Mammary epithelial cell (primary cell): ENCODE measurements at regions of chr1 and their contacts with region 1.

Region 1: DNA sequence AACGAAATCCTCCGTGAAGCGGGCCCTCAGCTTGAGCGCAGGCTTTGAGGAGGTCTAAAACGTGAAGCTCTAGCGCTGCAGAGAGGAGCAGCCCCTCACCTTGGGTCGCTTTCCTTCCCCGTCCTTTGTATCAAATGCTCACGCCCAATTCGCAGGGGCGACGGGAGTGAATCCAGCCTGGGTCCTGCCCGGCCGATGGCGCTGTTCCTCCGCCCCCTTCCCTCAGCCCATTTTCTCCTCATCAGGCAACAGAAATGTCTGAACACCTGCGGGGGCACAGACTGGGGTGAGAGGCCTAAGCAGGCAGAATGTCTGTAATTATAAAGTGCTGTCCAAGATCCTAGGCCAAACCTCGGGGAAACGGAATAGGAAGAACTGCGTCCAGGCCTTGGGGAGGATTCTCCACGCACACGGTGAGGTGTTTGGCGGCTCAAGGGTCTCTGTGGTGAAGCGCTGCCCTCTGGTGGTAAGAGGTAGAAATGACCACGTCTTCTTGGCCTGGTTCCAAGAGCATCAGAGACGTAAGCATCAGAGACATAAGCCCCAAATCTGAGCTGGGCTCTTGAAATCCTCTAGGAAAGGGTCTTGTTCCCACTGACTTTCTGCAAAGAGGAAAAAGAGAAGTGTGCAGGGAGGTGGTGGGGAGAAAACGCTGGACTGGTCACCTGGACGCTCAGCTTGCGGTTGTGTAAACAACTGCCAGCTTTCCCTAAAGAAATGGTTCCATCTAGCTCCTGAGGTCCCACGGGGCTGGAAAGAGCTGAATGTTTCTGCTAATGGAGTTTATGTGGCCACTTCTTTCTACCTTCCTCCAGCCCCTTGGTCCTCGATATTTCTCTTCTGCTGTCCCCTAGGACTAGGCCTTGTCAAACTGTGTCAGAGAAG is 92.1 kb upstream of the CD53 start:
- DNase-seq: peak; percentile 67
- H3K4me3 ChIP-seq: no peak overlapping the region
- H3K27ac ChIP-seq: no peak overlapping the region
- H3K4me1 ChIP-seq: peaks cover 15% of the 10 kb centered on the region
- H3K27me3 ChIP-seq: no peaks in the 10 kb centered on the region
- CTCF ChIP-seq: peak; percentile 85 to 87

Region 2: DNA sequence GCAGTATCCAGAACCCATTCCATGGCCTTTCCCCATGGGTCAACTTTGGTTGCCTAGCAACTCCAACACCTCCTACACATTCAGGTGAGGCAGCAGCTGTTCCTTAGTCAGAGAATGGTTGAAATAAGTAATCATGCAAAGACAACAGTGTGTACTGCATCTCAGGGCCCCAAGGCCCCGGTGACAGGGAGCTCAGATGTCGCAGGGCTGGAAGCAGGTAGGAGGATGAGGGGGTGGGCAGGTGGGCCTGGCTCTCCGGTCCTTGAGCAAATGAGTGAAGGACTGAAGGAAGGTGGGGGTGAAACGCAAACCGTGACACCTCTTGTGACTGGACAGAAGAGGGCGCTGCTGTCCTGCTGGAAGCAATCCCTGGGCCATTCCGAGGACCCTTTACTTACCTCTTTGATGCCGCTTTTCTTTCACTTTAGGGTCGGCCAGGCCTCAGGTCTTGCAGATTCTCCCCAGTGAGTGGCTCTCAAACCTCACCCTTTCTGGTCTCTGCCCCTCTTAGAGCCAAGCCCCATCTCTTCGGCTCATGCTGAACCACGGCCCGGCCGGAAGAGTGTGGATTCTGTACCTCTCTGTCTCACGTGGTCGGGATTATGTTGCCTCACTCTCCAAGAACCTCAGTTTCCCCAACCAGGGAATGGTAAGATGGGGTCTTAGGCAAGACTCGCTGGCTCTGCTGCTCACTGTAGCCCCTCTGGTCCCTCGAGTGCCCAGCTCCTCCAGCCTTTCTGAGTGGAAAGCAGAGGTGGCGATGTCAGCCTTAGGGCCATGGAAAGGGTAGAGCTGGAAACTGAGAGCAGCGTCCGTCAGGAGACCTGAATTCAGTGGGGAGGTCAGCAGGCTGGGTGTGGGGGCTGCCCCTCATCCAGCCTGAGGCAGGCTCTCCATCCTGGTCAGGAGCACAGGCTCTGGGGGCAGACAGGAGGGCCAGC is 256.3 kb before region 1 on chr1:
- CTCF ChIA-PET with region 1: no interaction called
- dilution Hi-C with region 1: no loop called
- in situ Hi-C with region 1: loop called in 1 of 2 experiments (anchors 10 kb)
- intact Hi-C with region 1: loop called (anchors 2 kb)
- DNase-seq: peak; percentile 41
- H3K4me3 ChIP-seq: no peak overlapping the region
- H3K27ac ChIP-seq: no peak overlapping the region
- H3K4me1 ChIP-seq: no peaks in the 10 kb centered on the region
- H3K27me3 ChIP-seq: peaks cover 2% of the 10 kb centered on the region
- CTCF ChIP-seq: peak; percentile 64 to 81

Region 3: DNA sequence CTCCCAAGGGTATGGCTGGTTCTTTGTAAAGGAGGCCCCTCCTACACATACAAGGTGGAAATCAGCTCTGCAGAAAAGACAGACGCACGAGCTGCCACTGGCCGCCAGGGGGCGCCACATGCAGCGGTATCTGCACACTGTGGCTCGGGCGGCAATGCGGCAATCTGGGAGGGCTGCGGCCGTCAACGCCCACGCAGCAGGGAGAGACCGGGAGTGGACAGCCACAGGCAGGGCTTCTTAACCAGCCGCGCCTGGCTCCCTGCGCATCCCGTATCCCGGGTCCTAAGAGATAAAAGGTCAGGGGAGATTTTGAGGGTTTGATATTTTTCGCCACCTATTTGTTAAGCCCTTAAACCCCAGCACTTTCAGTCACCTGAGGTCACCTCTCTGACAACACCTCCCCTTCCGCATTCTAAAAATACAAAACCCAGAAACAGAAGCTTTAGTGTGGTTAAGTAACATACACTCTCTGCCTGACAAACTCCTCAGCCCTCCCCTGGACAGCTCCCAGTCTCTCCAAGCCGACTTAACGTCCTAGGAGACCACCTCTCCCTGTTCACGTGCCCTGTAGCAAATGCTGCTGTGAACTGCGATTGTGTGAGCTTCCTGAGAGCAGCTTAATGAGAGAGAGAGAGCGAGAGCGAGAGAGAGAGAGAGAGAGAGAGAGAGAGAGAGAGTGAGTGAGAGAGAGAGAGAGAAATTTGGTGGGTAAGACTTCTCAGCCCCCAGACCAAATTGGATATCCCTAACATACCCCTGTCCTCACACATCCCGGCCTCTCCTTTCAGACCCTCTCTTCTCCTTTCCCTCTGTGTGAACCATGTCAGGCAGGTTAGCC is 161.2 kb before region 1 on chr1:
- CTCF ChIA-PET with region 1: interaction called, 3 read pairs
- dilution Hi-C with region 1: no loop called
- in situ Hi-C with region 1: loop called in 1 of 2 experiments (anchors 5 kb)
- intact Hi-C with region 1: loop called (anchors 1 kb)
- DNase-seq: peak; percentile 71
- H3K4me3 ChIP-seq: no peak overlapping the region
- H3K27ac ChIP-seq: no peak overlapping the region
- H3K4me1 ChIP-seq: peaks cover 4% of the 10 kb centered on the region
- H3K27me3 ChIP-seq: no peaks in the 10 kb centered on the region
- CTCF ChIP-seq: peak; percentile 89 to 95

Region 4: GRCh38 chr1:110734133-110734680 is 46.6 kb before region 1 on chr1:
- CTCF ChIA-PET with region 1: no interaction called
- dilution Hi-C with region 1: no loop called
- in situ Hi-C with region 1: no loop called
- intact Hi-C with region 1: no loop called
- DNase-seq: no peak
- H3K4me3 ChIP-seq: no peak overlapping the region
- H3K27ac ChIP-seq: no peak overlapping the region
- H3K4me1 ChIP-seq: no peaks in the 10 kb centered on the region
- H3K27me3 ChIP-seq: peaks cover 2% of the 10 kb centered on the region
- CTCF ChIP-seq: no peak

Region 5: GRCh38 chr1:110766025-110766647 is 14.7 kb before region 1 on chr1:
- CTCF ChIA-PET with region 1: interaction called, 3 read pairs
- dilution Hi-C with region 1: no loop called
- in situ Hi-C with region 1: no loop called
- intact Hi-C with region 1: loop called (anchors 2 kb)
- DNase-seq: peak; percentile 17
- H3K4me3 ChIP-seq: no peak overlapping the region
- H3K27ac ChIP-seq: no peak overlapping the region
- H3K4me1 ChIP-seq: peaks cover 12% of the 10 kb centered on the region
- H3K27me3 ChIP-seq: no peaks in the 10 kb centered on the region
- CTCF ChIP-seq: peak; percentile 83 to 93

Region 6: DNA sequence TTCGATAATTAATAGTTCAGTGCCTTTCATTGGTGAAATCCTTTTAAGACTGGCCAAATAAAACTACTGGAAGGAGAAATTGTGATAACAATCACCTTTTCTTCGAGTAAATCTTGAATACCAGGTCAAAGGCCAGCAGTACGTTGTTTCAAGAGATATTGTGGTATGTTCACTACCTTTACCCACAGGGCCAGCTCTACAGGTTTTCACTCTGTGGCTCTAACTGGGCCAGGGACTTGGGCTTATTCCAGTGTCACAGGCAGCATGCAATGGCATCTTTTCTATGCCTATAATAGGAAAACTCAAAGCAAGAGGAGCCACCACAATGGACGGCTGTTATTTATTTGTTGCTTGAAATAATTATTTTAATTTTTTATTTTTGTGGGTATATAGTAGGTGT is 209.7 kb after region 1 on chr1:
- CTCF ChIA-PET with region 1: interaction called, 3 read pairs
- dilution Hi-C with region 1: no loop called
- in situ Hi-C with region 1: no loop called
- intact Hi-C with region 1: loop called (anchors 1 kb)
- DNase-seq: no peak
- H3K4me3 ChIP-seq: no peak overlapping the region
- H3K27ac ChIP-seq: no peak overlapping the region
- H3K4me1 ChIP-seq: peaks cover 11% of the 10 kb centered on the region
- H3K27me3 ChIP-seq: peaks cover 5% of the 10 kb centered on the region
- CTCF ChIP-seq: no peak

Region 7: GRCh38 chr1:111334169-111334568 is 553.3 kb after region 1 on chr1:
- CTCF ChIA-PET with region 1: no interaction called
- dilution Hi-C with region 1: no loop called
- in situ Hi-C with region 1: no loop called
- intact Hi-C with region 1: loop called (anchors 5 kb)
- DNase-seq: peak; percentile 43
- H3K4me3 ChIP-seq: no peak overlapping the region
- H3K27ac ChIP-seq: no peak overlapping the region
- H3K4me1 ChIP-seq: no peaks in the 10 kb centered on the region
- H3K27me3 ChIP-seq: no peaks in the 10 kb centered on the region
- CTCF ChIP-seq: peak; percentile 80 to 83